Heart right ventricle (tissue), 16 donors: ENCODE measurements at regions of chr9 and their contacts with region 1.

Region 1: GRCh38 chr9:133199648-133200321 is 9.3 kb downstream of the OBP2B start:
- DNase-seq: peak; percentile 32 to 40
- ATAC-seq: peak in 7 of 8 donors; percentile 68 to 87 (median 78)
- H3K4me3 ChIP-seq: peak overlapping the region; percentile 11 to 62 (median 49)
- H3K27ac ChIP-seq: peak overlapping the region in 8 of 10 donors; percentile 38 to 80 (median 64)
- H3K4me1 ChIP-seq: peaks cover 0 to 4% (median 0%) of the 10 kb centered on the region in 9 donors
- H3K27me3 ChIP-seq: peaks cover 0 to 40% (median 12%) of the 10 kb centered on the region in 7 donors
- CTCF ChIP-seq: peak in 8 of 9 donors; percentile 8 to 53 (median 26)

Region 2: DNA sequence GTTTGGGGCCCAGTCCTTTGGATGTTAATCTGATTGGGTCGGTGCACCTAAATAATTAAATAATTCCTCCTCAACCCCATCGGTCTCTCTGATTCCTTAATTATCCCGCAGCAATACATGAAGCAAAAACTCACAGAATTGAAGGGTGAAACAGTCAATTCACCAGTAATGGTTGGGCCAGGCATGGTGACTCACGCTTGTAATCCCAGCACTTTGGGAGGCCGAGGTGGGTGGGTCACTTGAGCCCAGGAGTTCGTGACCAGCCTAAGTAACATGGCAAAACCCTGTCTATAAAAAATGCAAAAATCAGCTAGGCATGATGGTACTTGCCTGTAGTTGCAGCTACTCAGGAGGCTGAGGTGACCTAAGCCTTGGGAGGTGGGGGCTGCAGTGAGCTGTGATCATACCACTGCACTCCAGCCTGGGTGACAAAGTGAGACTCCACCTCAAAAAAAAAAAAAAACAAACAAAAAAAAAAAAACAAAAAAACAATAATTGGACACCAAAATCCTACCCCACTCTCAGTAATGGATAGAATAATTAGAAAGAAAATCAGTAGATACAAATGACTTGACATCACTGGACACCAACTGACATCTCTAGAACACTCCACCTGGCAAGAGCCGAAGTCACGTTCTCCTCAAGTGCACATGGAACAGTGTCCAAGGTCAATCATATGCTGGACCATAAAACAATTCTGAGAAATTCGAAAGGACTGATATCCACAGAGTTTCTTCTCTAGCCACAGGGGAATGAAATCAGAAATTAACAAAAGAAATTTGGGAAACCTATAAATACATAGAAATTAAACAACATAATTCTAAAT is 70.0 kb after region 1 on chr9:
- intact Hi-C with region 1: loop called in 1 of 10 experiments (anchors 10 kb)
- DNase-seq: no peak
- ATAC-seq: no peak
- H3K4me3 ChIP-seq: no peak overlapping the region
- H3K27ac ChIP-seq: no peak overlapping the region
- H3K4me1 ChIP-seq: peaks cover 0 to 22% (median 0%) of the 10 kb centered on the region in 9 donors
- H3K27me3 ChIP-seq: peaks cover 0 to 18% (median 5%) of the 10 kb centered on the region in 7 donors
- CTCF ChIP-seq: no peak